A673 (cell line): ENCODE measurements at regions of chr16 and their contacts with region 1.

Region 1: GRCh38 chr16:67514382-67514828 is 14.2 kb upstream of the RIPOR1 start:
- DNase-seq: peak; percentile 89
- H3K4me3 ChIP-seq: no peak overlapping the region
- H3K27ac ChIP-seq: no peak overlapping the region
- H3K4me1 ChIP-seq: no peaks in the 10 kb centered on the region
- H3K27me3 ChIP-seq: no peaks in the 10 kb centered on the region
- CTCF ChIP-seq: peak; percentile 72

Region 2: GRCh38 chr16:67480833-67481560 is 33.4 kb before region 1 on chr16 and contains the start of gene ATP6V0D1:
- CTCF ChIA-PET with region 1: interaction called, 14 read pairs
- POLR2A ChIA-PET with region 1: interaction called, 4 read pairs
- intact Hi-C with region 1: no loop called
- DNase-seq: peak; percentile 98
- H3K4me3 ChIP-seq: peak within 1 kb of the TSS; percentile 95
- H3K27ac ChIP-seq: peak within 1 kb of the TSS; percentile 83
- H3K4me1 ChIP-seq: no peaks in the 10 kb centered on the region
- H3K27me3 ChIP-seq: no peaks in the 10 kb centered on the region
- CTCF ChIP-seq: peak; percentile 96
- total RNA-seq, gene ATP6V0D1: 56.5 and 63.9 TPM in 2 replicates

Region 3: GRCh38 chr16:67490335-67491096 is 23.9 kb before region 1 on chr16:
- CTCF ChIA-PET with region 1: interaction called, 10 read pairs
- POLR2A ChIA-PET with region 1: interaction called, 4 read pairs
- intact Hi-C with region 1: loop called (anchors 1 kb)
- DNase-seq: no peak
- H3K4me3 ChIP-seq: no peak overlapping the region
- H3K27ac ChIP-seq: no peak overlapping the region
- H3K4me1 ChIP-seq: no peaks in the 10 kb centered on the region
- H3K27me3 ChIP-seq: no peaks in the 10 kb centered on the region
- CTCF ChIP-seq: no peak

Region 4: GRCh38 chr16:67499106-67499505 is 15.3 kb before region 1 on chr16:
- CTCF ChIA-PET with region 1: interaction called, 10 read pairs
- POLR2A ChIA-PET with region 1: interaction called, 5 read pairs
- intact Hi-C with region 1: loop called (anchors 1 kb)
- DNase-seq: no peak
- H3K4me3 ChIP-seq: no peak overlapping the region
- H3K27ac ChIP-seq: no peak overlapping the region
- H3K4me1 ChIP-seq: no peaks in the 10 kb centered on the region
- H3K27me3 ChIP-seq: no peaks in the 10 kb centered on the region
- CTCF ChIP-seq: no peak

Region 5: GRCh38 chr16:67561824-67562525 is 47.6 kb after region 1 on chr16:
- CTCF ChIA-PET with region 1: no interaction called
- POLR2A ChIA-PET with region 1: no interaction called
- intact Hi-C with region 1: no loop called
- DNase-seq: peak; percentile 98
- H3K4me3 ChIP-seq: peak overlapping the region; percentile 98
- H3K27ac ChIP-seq: peak overlapping the region; percentile 100
- H3K4me1 ChIP-seq: peaks cover 13% of the 10 kb centered on the region
- H3K27me3 ChIP-seq: no peaks in the 10 kb centered on the region
- CTCF ChIP-seq: no peak